Adrenal gland (tissue), 19 donors: ENCODE measurements at regions of chr2 and their contacts with region 1.

Region 1: DNA sequence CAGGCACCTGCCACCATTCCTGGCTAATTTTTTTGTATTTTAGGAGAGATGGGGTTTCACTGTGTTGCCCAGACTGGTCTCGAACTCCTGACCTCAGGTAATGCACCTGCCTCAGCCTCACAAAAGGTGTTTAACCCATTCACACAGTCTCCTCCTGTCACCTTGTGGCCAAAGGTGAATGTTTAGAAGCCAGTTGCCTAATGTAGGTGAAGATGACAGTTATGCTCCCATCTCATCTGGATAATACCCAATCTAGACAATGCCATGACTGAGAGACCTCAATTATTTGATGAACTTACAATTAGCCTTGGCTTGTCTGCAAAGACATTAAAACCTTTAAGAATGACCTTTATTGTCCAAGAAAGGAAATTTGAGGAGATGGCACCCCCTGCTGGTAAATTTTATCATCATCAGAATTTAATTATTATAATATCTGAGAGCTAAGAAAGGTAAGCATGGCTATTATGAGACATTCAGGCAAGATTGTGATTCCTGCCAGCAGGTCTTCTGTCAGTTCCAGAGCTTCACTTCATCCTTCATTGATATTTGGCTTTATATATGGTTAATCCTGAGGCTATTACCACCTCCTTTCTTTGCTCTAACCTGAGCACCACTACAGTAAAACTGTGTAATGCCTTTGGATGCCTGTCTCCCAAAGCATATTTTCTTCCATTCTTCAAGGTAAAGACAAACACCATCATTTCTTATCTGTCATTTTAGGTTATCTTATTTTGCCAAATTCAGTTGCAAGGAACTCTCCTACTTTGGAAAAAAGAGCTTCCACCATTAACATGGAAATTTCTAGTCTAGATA is 117.6 kb downstream of the FAM124B start:
- DNase-seq: peak in 3 of 7 donors; percentile 23 to 25 (median 23)
- H3K4me3 ChIP-seq: no peak overlapping the region
- H3K27ac ChIP-seq: no peak overlapping the region
- H3K4me1 ChIP-seq: no peaks in the 10 kb centered on the region
- H3K27me3 ChIP-seq: peaks cover 4% of the 10 kb centered on the region
- CTCF ChIP-seq: peak; percentile 63 to 89 (median 78)
- POLR2A ChIP-seq: no peak

Region 2: GRCh38 chr2:223970343-223971128 is 313.8 kb before region 1 on chr2:
- intact Hi-C with region 1: loop called (anchors 5 kb)
- DNase-seq: peak in 5 of 7 donors; percentile 26 to 68 (median 62)
- H3K4me3 ChIP-seq: no peak overlapping the region
- H3K27ac ChIP-seq: no peak overlapping the region
- H3K4me1 ChIP-seq: no peaks in the 10 kb centered on the region
- H3K27me3 ChIP-seq: no peaks in the 10 kb centered on the region
- CTCF ChIP-seq: peak; percentile 85 to 98 (median 91)
- POLR2A ChIP-seq: no peak

Region 3: DNA sequence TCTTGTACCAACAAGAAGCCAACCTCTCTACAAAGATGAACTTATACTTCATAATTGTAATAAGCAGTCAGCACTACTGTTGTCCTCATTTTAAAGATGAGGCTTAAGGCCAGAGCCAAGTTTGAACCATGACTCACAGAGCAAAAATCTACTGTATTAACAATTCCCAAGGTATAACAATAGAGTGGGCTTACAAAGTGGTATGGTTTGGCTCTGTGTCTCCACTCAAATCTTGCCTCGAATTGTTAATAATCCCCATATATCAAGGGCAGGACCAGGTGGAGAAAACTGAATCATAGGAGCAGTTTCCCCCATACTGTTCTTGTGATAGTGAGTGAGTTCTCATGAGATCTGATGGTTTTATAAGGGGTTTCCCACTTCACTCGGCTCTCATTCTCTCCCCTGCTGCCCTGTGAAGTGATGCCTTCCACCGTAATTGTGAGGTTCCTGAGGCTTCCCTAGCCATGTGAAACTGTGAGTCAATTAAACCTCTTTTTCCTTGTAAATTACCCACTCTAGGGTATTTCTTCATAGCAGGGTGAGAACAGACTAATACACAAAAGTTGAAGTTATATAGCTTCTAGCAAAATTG is 307.6 kb before region 1 on chr2:
- intact Hi-C with region 1: loop called (anchors 5 kb)
- DNase-seq: no peak
- H3K4me3 ChIP-seq: no peak overlapping the region
- H3K27ac ChIP-seq: no peak overlapping the region
- H3K4me1 ChIP-seq: no peaks in the 10 kb centered on the region
- H3K27me3 ChIP-seq: no peaks in the 10 kb centered on the region
- CTCF ChIP-seq: no peak
- POLR2A ChIP-seq: no peak

Region 4: DNA sequence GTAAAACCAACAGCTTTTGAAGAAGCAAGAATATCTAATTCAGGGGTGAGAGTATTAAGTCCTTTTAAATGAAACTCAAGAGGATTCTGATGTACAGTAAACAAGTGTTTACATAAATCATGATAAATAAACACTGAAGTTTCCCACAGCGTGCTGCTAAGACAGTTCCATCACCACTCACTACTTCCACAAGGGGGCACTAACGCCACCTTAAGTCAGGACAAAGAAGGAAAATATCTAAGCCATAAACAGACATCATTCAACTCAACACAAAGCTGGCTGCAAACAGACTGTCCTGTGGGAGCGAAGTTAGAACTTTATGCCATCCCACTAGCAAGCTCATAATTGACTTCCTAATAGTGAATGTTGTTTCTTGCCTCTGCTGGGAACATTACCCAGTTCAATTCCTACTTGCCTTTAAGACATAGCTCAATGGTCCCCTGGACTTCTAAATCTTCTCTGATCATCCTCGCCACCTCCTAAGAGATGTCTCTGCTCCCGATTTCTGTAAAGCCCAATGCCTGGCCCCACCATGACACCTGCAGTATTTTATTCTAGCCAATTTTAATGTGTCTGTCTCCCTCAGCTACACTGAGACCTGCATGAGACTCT is 290.6 kb before region 1 on chr2:
- intact Hi-C with region 1: loop called (anchors 5 kb)
- DNase-seq: peak; percentile 48 to 89 (median 69)
- H3K4me3 ChIP-seq: no peak overlapping the region
- H3K27ac ChIP-seq: no peak overlapping the region
- H3K4me1 ChIP-seq: no peaks in the 10 kb centered on the region
- H3K27me3 ChIP-seq: no peaks in the 10 kb centered on the region
- CTCF ChIP-seq: peak; percentile 65 to 82 (median 80)
- POLR2A ChIP-seq: no peak